Mammary epithelial cell (primary cell): ENCODE measurements at regions of chr12 and their contacts with region 1.

Region 1: DNA sequence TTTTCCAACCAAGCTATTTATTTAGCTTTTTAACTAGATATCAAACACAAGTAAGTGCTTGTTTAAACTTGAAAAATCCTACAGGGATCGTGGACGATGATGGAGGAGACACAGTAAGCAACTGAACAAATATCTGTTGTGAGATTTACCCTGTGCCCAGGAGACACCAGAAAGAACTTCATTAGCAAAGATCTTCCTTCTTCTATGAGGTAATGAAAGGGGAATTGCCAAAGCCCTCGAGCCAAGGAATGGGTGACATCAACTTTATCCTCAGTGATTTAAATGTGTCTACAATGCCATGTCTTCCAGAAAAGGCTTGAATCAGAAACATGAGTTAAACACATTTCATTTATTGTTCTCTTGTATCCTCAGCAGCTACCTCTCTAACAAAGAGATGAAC is 255.8 kb upstream of the GRIP1 start:
- DNase-seq: no peak
- H3K4me3 ChIP-seq: no peak overlapping the region
- H3K27ac ChIP-seq: no peak overlapping the region
- H3K4me1 ChIP-seq: no peaks in the 10 kb centered on the region
- H3K27me3 ChIP-seq: no peaks in the 10 kb centered on the region
- CTCF ChIP-seq: no peak

Region 2: DNA sequence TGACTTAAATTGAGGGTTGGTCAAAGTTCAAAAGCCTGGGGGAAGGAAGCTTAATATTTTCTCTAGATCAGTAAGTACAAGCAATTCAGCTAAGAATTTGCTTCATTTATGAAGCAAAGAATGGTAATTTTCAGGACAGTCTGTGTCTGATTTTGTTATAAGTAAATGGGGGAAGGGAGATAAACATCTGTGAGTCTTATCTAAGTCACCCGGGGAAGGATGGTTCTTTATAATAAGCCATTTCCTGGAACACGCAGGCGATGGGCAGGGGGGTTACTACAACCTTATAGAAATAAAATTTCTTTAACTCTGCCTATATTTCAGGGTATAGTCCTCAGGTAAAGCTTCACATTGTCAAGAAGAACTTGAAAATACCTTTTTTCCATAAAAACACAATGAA is 589.5 kb before region 1 on chr12:
- CTCF ChIA-PET with region 1: no interaction called
- dilution Hi-C with region 1: no loop called
- in situ Hi-C with region 1: no loop called
- intact Hi-C with region 1: no loop called
- DNase-seq: no peak
- H3K4me3 ChIP-seq: no peak overlapping the region
- H3K27ac ChIP-seq: no peak overlapping the region
- H3K4me1 ChIP-seq: no peaks in the 10 kb centered on the region
- H3K27me3 ChIP-seq: no peaks in the 10 kb centered on the region
- CTCF ChIP-seq: no peak

Region 3: DNA sequence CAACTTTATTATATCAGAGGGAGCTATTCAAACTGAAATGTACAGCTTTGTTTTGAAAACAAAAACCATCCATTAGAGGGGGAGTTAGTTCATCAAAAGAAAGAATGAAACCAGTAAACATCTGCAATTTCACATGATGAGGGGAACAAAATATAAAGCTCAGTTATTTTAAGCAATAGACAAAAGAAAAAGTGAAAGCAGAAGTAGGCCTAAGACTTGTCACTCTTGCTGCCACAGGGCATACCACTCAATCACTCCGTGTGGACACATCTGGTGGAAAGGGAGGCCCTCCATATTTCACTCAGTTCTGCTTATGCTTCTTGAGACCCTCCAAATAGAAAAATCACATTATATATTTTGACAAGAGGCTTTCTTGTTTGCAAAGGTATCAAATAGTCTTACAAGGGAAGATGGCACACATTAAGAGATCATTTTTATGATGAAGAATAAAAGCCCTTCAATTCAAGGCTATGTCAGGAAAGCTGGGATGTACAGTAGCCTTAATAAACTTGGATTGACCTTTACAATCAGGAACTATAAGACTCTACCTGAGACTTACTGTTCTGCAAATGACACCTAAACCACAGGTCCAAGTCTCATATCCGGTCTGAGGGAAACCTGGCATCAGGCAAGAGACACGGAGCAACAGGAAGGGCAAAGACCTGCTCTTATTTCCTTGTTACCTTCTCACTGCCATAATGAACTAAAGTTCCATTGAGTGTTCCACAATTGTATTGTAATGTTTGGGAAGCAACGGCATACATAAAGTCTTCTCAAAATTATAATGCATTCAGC is 33.4 kb before region 1 on chr12:
- CTCF ChIA-PET with region 1: no interaction called
- dilution Hi-C with region 1: no loop called
- in situ Hi-C with region 1: no loop called
- intact Hi-C with region 1: no loop called
- DNase-seq: peak; percentile 24
- H3K4me3 ChIP-seq: no peak overlapping the region
- H3K27ac ChIP-seq: no peak overlapping the region
- H3K4me1 ChIP-seq: peaks cover 8% of the 10 kb centered on the region
- H3K27me3 ChIP-seq: no peaks in the 10 kb centered on the region
- CTCF ChIP-seq: no peak

Region 4: DNA sequence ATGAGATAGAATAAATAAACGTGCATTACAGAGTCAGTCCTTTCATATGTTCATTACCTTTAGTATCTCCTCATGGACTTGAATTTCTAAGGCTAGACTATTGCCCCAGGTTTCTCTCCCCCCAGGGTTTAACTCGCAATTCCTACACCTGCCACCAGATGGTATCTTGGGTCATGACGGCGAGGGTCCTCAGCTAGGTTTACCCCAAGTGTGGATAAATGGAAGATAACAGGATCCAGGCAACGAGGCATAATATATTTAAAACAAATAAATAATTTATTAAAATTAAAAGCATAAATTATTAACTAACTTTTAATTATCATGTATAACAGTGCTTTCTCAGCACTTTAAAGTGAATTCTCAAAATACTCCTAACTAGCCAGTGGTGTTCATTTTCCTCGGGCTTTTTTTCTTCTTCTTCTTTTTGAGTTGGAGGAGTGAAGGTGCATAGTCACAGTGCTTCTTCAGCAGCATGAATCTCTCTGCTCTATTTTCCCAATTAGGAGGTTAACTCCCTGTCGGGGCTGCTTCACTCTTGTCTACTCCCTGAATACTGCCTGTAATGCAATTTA is 90.9 kb after region 1 on chr12:
- CTCF ChIA-PET with region 1: no interaction called
- dilution Hi-C with region 1: loop called (anchors 5 kb)
- in situ Hi-C with region 1: no loop called
- intact Hi-C with region 1: no loop called
- DNase-seq: peak; percentile 28
- H3K4me3 ChIP-seq: no peak overlapping the region
- H3K27ac ChIP-seq: no peak overlapping the region
- H3K4me1 ChIP-seq: no peaks in the 10 kb centered on the region
- H3K27me3 ChIP-seq: no peaks in the 10 kb centered on the region
- CTCF ChIP-seq: peak; percentile 77 to 84